ENCODE measurements at regions of chr6 and their contacts with region 1.

Region 1: GRCh38 chr6:75631859-75632635 is 30.4 kb downstream of the SENP6 start:
- DNase-seq: no peak
- H3K4me3 ChIP-seq: no peak overlapping the region
- H3K27ac ChIP-seq: no peak overlapping the region
- H3K4me1 ChIP-seq: no peaks in the 10 kb centered on the region
- H3K27me3 ChIP-seq: no peaks in the 10 kb centered on the region
- CTCF ChIP-seq: no peak
- POLR2A ChIP-seq: no peak

Region 2: GRCh38 chr6:75412969-75413662 is 218.9 kb before region 1 on chr6:
- CTCF ChIA-PET with region 1: no interaction called
- POLR2A ChIA-PET with region 1: no interaction called
- dilution Hi-C with region 1: no loop called
- intact Hi-C with region 1: no loop called
- DNase-seq: peak; percentile 78
- H3K4me3 ChIP-seq: no peak overlapping the region
- H3K27ac ChIP-seq: peak overlapping the region; percentile 82
- H3K4me1 ChIP-seq: peaks cover 43% of the 10 kb centered on the region
- H3K27me3 ChIP-seq: no peaks in the 10 kb centered on the region
- CTCF ChIP-seq: no peak
- POLR2A ChIP-seq: no peak

Region 3: DNA sequence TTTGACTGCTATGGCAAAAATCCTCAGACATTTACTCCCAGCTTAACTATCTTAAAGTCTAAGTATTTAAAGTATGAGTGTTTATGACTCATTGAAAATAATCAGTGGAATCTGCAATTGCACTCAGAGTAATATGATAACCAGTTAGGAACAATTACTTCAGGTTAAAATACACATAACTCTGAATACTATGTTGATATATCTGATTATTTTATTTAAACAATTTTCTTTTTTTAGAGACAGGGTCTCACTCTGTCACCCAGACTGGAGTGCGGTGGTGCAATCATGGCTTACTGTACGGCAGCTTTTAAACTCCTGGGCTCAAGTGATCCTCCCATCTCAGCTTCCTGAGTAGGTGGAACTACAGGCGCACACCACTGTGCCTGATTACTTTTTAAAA is 182.3 kb before region 1 on chr6:
- CTCF ChIA-PET with region 1: no interaction called
- POLR2A ChIA-PET with region 1: no interaction called
- dilution Hi-C with region 1: no loop called
- intact Hi-C with region 1: no loop called
- DNase-seq: no peak
- H3K4me3 ChIP-seq: no peak overlapping the region
- H3K27ac ChIP-seq: no peak overlapping the region
- H3K4me1 ChIP-seq: no peaks in the 10 kb centered on the region
- H3K27me3 ChIP-seq: peaks cover 2 to 8% of the 10 kb centered on the region in 2 experiments
- CTCF ChIP-seq: no peak
- POLR2A ChIP-seq: no peak

Region 4: DNA sequence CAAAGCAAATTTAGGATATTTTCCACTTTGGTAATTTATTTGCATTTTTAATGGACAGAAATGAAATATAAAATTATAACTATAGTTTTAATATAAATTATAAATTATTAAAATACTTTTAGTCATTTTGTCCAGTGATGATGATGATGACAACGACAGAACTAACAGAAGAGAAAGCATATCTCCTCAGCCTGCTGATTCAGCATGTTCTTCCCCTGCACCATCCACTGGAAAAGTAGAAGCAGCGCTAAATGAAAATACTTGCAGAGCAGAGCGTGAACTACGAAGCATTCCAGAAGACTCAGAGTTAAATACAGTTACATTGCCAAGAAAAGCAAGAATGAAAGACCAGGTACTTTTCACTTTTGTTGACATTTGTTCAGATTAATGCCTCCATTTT is 34.5 kb after region 1 on chr6:
- CTCF ChIA-PET with region 1: no interaction called
- POLR2A ChIA-PET with region 1: no interaction called
- dilution Hi-C with region 1: no loop called
- intact Hi-C with region 1: loop called (anchors 1 kb)
- DNase-seq: no peak
- H3K4me3 ChIP-seq: no peak overlapping the region
- H3K27ac ChIP-seq: no peak overlapping the region
- H3K4me1 ChIP-seq: no peaks in the 10 kb centered on the region
- H3K27me3 ChIP-seq: no peaks in the 10 kb centered on the region
- CTCF ChIP-seq: no peak
- POLR2A ChIP-seq: no peak

Region 5: DNA sequence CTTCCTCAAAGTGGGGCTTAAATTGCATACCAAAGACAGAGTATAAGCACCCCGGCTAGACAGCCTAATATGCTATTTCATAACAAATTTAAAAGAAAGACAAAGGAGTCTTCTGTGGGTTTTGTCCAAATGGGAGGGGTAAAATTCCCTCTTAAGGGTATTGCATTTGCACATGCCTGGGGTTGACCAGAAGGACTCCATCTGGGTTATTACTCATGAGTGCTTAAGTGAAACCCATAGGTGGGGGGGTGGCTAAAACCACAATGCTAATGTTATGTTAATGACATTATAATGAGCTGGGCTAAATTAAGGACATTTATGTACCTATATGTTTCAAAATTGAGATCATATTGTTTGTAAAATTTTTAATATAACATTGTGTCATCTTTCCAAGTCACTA is 425.4 kb after region 1 on chr6:
- CTCF ChIA-PET with region 1: no interaction called
- POLR2A ChIA-PET with region 1: no interaction called
- dilution Hi-C with region 1: no loop called
- intact Hi-C with region 1: no loop called
- DNase-seq: no peak
- H3K4me3 ChIP-seq: no peak overlapping the region
- H3K27ac ChIP-seq: no peak overlapping the region
- H3K4me1 ChIP-seq: no peaks in the 10 kb centered on the region
- H3K27me3 ChIP-seq: peaks cover 0 to 1% of the 10 kb centered on the region in 2 experiments
- CTCF ChIP-seq: no peak
- POLR2A ChIP-seq: no peak

Measured in endothelial cell of umbilical vein (primary cell).